ENCODE measurements at regions of chr3 and their contacts with region 1.

Region 1: GRCh38 chr3:16467393-16467792 is 46.1 kb downstream of the RFTN1 start:
- DNase-seq: no peak

Region 2: GRCh38 chr3:16511681-16512434 is 44.5 kb after region 1 on chr3:
- intact Hi-C with region 1: loop called (anchors 5 kb)
- DNase-seq: peak; percentile 81

Region 3: GRCh38 chr3:16860234-16860633 is 392.8 kb after region 1 on chr3:
- intact Hi-C with region 1: no loop called
- DNase-seq: no peak